ENCODE measurements at regions of chr1 and their contacts with region 1.

Region 1: DNA sequence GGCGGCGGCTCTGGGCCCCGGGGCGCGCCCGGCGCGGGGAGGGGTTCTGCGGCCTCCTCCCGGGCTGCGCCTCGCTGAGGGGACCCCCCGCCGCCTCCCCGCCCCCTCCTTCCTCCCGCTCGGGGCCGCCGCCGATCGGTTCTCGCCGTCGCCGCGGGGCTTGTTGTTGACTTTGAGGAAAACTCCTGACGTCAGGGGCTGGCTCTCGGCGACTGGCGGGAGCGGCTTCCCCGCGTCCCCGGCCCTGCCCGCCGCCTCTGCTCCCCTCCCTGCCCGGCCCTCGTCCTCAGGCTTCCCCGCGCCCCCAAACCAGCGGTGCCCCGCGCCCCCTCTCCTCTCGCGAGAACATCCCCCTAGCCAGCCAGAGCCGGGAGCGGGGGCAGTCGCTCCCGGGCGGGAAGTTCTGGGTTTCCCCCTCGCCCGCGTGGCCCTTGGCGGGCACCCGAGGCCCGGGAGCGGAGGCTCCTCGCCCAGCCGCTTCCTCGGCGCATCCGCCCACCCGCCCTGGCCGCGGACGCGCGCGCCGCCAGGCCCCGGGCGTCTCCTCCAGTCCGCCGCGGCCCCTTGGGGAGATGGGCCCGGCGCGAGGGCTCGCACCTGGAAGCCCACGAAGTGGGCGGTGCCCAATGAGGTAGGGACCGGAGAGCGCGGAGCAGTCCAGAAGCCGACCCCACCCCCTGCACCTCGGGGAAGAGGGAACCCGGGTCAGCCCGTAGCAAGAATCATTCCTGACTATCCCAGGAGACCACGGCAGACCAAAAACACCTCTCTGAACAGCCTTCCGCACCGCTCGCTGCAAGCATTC is 611 bp upstream of the AKT3 start:
- DNase-seq: peak; percentile 89
- H3K4me3 Mint-ChIP-seq: peak overlapping the region; percentile 79
- H3K27ac Mint-ChIP-seq: peak overlapping the region; percentile 84
- H3K4me1 Mint-ChIP-seq: peaks cover 32% of the 10 kb centered on the region
- H3K27me3 Mint-ChIP-seq: no peaks in the 10 kb centered on the region

Region 2: GRCh38 chr1:243343970-243344937 is 506.4 kb before region 1 on chr1:
- CTCF ChIA-PET with region 1: interaction called, 3 read pairs
- POLR2A ChIA-PET with region 1: no interaction called
- intact Hi-C with region 1: loop called (anchors 10 kb)
- DNase-seq: no peak
- H3K4me3 Mint-ChIP-seq: no peak overlapping the region
- H3K27ac Mint-ChIP-seq: no peak overlapping the region
- H3K4me1 Mint-ChIP-seq: peaks cover 2% of the 10 kb centered on the region
- H3K27me3 Mint-ChIP-seq: no peaks in the 10 kb centered on the region

Region 3: DNA sequence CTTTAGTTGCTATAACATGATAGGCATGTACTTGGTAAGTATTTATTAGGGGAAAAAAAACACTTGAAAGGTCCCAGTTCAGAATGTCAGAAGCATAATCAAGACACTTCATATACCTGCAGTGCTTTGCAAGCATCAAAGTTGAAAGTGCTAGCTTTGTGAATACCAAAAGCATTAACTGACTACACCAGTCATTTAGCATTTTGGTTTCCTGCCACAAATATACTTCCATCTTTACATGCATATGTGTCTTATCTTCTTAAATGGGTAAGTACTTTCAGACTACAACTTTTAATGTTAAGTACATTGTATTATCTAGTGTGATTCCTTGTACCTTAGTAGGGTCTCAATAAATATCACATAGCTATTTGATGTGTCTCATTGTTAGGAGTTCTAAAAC is 44.3 kb before region 1 on chr1:
- CTCF ChIA-PET with region 1: no interaction called
- POLR2A ChIA-PET with region 1: no interaction called
- intact Hi-C with region 1: loop called (anchors 2 kb)
- DNase-seq: no peak
- H3K4me3 Mint-ChIP-seq: no peak overlapping the region
- H3K27ac Mint-ChIP-seq: no peak overlapping the region
- H3K4me1 Mint-ChIP-seq: peaks cover 70% of the 10 kb centered on the region
- H3K27me3 Mint-ChIP-seq: no peaks in the 10 kb centered on the region

Region 4: GRCh38 chr1:243837907-243838535 is 12.6 kb before region 1 on chr1:
- CTCF ChIA-PET with region 1: interaction called, 5 read pairs
- POLR2A ChIA-PET with region 1: interaction called, 17 read pairs
- intact Hi-C with region 1: loop called (anchors 1 kb)
- DNase-seq: no peak
- H3K4me3 Mint-ChIP-seq: no peak overlapping the region
- H3K27ac Mint-ChIP-seq: peak overlapping the region; percentile 2
- H3K4me1 Mint-ChIP-seq: peaks cover 39% of the 10 kb centered on the region
- H3K27me3 Mint-ChIP-seq: no peaks in the 10 kb centered on the region

Region 5: GRCh38 chr1:243946946-243947345 is 96.3 kb after region 1 on chr1:
- CTCF ChIA-PET with region 1: no interaction called
- POLR2A ChIA-PET with region 1: no interaction called
- intact Hi-C with region 1: loop called (anchors 5 kb)
- DNase-seq: peak; percentile 56
- H3K4me3 Mint-ChIP-seq: no peak overlapping the region
- H3K27ac Mint-ChIP-seq: no peak overlapping the region
- H3K4me1 Mint-ChIP-seq: peaks cover 1% of the 10 kb centered on the region
- H3K27me3 Mint-ChIP-seq: peaks cover 5% of the 10 kb centered on the region

Region 6: GRCh38 chr1:244272471-244273261 is 422.0 kb after region 1 on chr1:
- CTCF ChIA-PET with region 1: interaction called, 4 read pairs
- POLR2A ChIA-PET with region 1: no interaction called
- intact Hi-C with region 1: loop called (anchors 5 kb)
- DNase-seq: peak; percentile 80
- H3K4me3 Mint-ChIP-seq: no peak overlapping the region
- H3K27ac Mint-ChIP-seq: no peak overlapping the region
- H3K4me1 Mint-ChIP-seq: peaks cover 5% of the 10 kb centered on the region
- H3K27me3 Mint-ChIP-seq: peaks cover 1% of the 10 kb centered on the region

Region 7: DNA sequence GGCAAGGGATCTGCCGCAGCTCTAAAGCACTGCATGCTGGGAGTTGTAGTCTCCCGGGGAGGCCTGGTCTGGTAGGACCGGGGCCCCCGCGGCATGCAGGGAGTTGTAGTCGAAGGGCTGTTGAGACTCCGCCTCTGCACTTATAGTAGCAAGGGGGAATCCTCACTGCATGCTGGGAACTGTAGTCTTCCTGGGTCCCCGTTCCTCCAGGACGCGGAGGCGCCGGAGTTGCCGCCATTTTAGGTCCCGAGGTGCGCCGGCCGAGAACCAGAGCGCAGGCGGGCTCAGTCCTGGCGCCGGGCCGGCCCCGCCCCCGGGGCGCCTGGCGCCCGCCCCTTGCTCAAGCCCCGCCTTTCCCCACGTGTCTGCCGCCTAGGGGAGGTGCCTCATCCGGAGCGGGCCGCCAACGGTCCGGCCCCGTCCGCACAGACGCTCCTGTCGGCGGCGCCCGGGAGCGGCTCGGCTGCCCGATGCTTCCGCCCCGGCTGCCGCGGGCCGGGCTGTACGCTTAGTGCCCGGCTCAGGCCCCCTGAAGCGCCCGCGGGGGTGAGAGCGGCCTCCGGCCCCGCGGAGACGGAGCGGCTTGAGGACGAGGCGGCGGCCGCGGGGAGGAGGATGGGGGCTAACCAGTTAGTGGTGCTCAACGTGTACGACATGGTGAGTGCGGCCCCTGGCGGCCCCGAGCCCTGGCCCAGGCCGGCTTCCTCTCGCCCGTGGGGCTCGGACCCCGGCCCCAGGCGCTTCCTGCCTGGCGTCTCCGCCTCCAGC is 802.2 kb after region 1 on chr1 and contains the start of gene DESI2:
- CTCF ChIA-PET with region 1: no interaction called
- POLR2A ChIA-PET with region 1: no interaction called
- intact Hi-C with region 1: loop called (anchors 5 kb)
- DNase-seq: peak; percentile 98
- H3K4me3 Mint-ChIP-seq: peak within 1 kb of the TSS; percentile 79
- H3K27ac Mint-ChIP-seq: peak within 1 kb of the TSS; percentile 79
- H3K4me1 Mint-ChIP-seq: peaks cover 22% of the 10 kb centered on the region
- H3K27me3 Mint-ChIP-seq: no peaks in the 10 kb centered on the region
- total RNA-seq, gene DESI2: 24.8 to 25.6 TPM